ENCODE measurements at regions of chr22 and their contacts with region 1.

Region 1: DNA sequence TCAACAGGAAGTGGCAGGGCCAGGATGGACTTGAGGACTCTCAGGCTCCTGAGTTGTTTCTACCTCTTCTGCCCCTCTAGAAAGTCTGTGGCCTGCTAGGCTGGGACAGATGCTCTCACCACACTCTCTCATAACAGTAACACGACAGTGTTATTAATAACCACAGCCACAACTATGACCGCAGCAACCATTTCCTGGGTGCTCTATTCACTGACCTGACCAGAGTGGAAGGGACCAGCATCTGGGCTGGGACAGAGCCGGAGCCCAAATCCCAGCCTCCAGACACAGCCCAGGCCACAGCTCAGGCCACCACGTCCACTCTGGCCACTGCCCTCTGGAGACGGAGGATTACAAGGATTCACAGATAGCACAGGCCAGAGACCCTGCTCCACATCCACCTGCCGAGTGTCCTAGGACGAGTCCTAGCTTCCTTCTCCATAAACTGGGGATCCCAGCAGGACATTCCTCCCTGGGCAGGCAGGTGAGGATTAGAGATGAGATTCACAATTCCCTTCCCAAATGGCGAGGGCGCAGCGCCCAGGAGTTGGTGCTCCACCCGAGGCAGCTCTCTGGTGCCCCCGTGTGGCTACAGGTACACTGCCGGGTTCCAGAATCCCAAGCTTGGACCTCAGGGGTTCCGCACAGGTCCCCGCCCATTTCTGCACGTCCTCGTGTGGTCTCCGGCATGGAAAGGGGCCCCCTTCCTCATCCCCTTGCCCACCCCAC is 7.0 kb downstream of the PNPLA5 start:
- DNase-seq: peak; percentile 63 to 86 (median 77)
- H3K4me3 ChIP-seq: no peak overlapping the region
- H3K27ac ChIP-seq: no peak overlapping the region
- H3K4me1 ChIP-seq: no peaks in the 10 kb centered on the region
- H3K27me3 ChIP-seq: no peaks in the 10 kb centered on the region
- CTCF ChIP-seq: peak; percentile 49 to 62 (median 55)
- EP300 ChIP-seq: no peak
- POLR2A ChIP-seq: no peak

Region 2: GRCh38 chr22:43230971-43231723 is 653.6 kb before region 1 on chr22:
- intact Hi-C with region 1: loop called in 1 of 4 experiments (anchors 10 kb)
- DNase-seq: peak; percentile 65 to 83 (median 80)
- H3K4me3 ChIP-seq: no peak overlapping the region
- H3K27ac ChIP-seq: no peak overlapping the region
- H3K4me1 ChIP-seq: peaks cover 6% of the 10 kb centered on the region
- H3K27me3 ChIP-seq: no peaks in the 10 kb centered on the region
- CTCF ChIP-seq: peak; percentile 80 to 94 (median 90)
- EP300 ChIP-seq: no peak
- POLR2A ChIP-seq: no peak